Dendritic cell treated with granulocyte-macrophage colony-stimulating factor and Interleukin-4, amounts not matched to agents 40 ng/mL and 50 ng/mL, for 4 days (primary cell): ENCODE measurements at regions of chr5 and their contacts with region 1.

Region 1: GRCh38 chr5:151447174-151448037 is at the start of gene SLC36A1:
- H3K4me3 Mint-ChIP-seq: peak within 1 kb of the TSS; percentile 96
- H3K27ac Mint-ChIP-seq: peak within 1 kb of the TSS; percentile 90
- H3K4me1 Mint-ChIP-seq: peaks cover 38% of the 10 kb centered on the region
- H3K27me3 Mint-ChIP-seq: no peaks in the 10 kb centered on the region

Region 2: GRCh38 chr5:151499501-151500035 is 52.2 kb after region 1 on chr5:
- intact Hi-C with region 1: loop called (anchors 1 kb)
- H3K4me3 Mint-ChIP-seq: no peak overlapping the region
- H3K27ac Mint-ChIP-seq: peak overlapping the region; percentile 40
- H3K4me1 Mint-ChIP-seq: peaks cover 17% of the 10 kb centered on the region
- H3K27me3 Mint-ChIP-seq: no peaks in the 10 kb centered on the region

Region 3: DNA sequence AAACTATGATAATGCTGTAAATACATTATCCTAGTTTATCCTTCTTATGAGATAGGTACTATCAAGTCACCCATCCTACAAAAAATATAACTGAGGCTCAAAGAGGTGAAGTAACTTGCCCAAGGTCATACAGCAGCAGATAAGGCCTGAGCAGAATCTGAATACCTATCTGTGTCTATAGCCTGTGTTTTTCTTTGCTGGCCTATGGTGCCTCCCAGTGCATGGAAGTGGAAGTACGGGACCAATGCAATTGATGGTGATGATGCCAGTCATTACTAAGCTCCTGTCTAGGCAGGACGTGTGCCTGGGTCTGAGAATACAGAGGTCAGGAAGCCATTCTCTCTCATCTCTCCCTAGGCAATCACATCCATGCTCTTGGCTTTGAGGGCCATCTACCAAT is 75.9 kb after region 1 on chr5:
- intact Hi-C with region 1: loop called (anchors 2 kb)
- H3K4me3 Mint-ChIP-seq: no peak overlapping the region
- H3K27ac Mint-ChIP-seq: no peak overlapping the region
- H3K4me1 Mint-ChIP-seq: peaks cover 11% of the 10 kb centered on the region
- H3K27me3 Mint-ChIP-seq: no peaks in the 10 kb centered on the region

Region 4: GRCh38 chr5:151651997-151652645 is 204.7 kb after region 1 on chr5:
- intact Hi-C with region 1: loop called (anchors 1 kb)
- H3K4me3 Mint-ChIP-seq: no peak overlapping the region
- H3K27ac Mint-ChIP-seq: no peak overlapping the region
- H3K4me1 Mint-ChIP-seq: peaks cover 7% of the 10 kb centered on the region
- H3K27me3 Mint-ChIP-seq: no peaks in the 10 kb centered on the region

Region 5: DNA sequence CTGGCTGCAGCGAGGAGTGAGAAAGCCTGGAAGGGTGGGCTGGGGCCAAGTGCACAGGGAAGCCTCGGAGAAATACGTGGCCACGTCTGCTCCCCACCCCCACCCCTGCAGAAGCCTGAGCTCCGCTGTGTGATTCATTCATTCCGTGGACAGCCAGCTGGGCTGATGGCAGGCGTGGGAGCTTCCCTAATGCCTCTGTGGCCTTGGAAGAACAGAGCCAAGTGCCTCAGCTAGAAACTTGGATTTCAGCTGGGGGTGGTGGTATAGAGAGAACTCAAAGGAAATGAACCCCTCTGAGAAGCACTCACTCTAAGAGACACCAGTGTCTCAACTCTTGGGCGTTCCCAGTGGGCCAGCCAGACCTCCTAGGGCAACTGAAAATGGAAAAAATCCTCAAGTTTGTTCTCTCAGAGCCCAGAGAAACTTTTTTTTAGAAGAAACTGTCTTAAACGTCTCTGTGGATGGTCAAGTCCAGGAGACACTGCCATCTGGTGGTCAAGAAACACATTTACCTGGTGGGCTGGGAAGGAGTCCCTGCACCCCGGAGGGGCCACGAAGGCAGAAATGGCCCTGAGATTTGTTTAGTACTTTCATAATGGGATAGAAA is 293.0 kb after region 1 on chr5:
- intact Hi-C with region 1: loop called (anchors 5 kb)
- H3K4me3 Mint-ChIP-seq: no peak overlapping the region
- H3K27ac Mint-ChIP-seq: no peak overlapping the region
- H3K4me1 Mint-ChIP-seq: peaks cover 17% of the 10 kb centered on the region
- H3K27me3 Mint-ChIP-seq: no peaks in the 10 kb centered on the region

Region 6: GRCh38 chr5:151781201-151781600 is 333.8 kb after region 1 on chr5:
- intact Hi-C with region 1: no loop called
- H3K4me3 Mint-ChIP-seq: no peak overlapping the region
- H3K27ac Mint-ChIP-seq: no peak overlapping the region
- H3K4me1 Mint-ChIP-seq: peaks cover 44% of the 10 kb centered on the region
- H3K27me3 Mint-ChIP-seq: no peaks in the 10 kb centered on the region